Mammary epithelial cell (primary cell): ENCODE measurements at regions of chr16 and their contacts with region 1.

Region 1: GRCh38 chr16:84044118-84044488 is 1.5 kb upstream of the SLC38A8 start:
- DNase-seq: no peak
- H3K4me3 ChIP-seq: no peak overlapping the region
- H3K27ac ChIP-seq: no peak overlapping the region
- H3K4me1 ChIP-seq: no peaks in the 10 kb centered on the region
- H3K27me3 ChIP-seq: peaks cover 3% of the 10 kb centered on the region
- CTCF ChIP-seq: peak; percentile 5 to 45

Region 2: GRCh38 chr16:83952940-83953795 is 90.9 kb before region 1 on chr16 and contains the start of gene OSGIN1:
- CTCF ChIA-PET with region 1: interaction called, 6 read pairs
- dilution Hi-C with region 1: loop called (anchors 5 kb)
- in situ Hi-C with region 1: loop called in 1 of 2 experiments (anchors 5 kb)
- intact Hi-C with region 1: loop called (anchors 2 kb)
- DNase-seq: peak; percentile 92
- H3K4me3 ChIP-seq: peak within 1 kb of the TSS; percentile 65 to 76 (median 66)
- H3K27ac ChIP-seq: peak within 1 kb of the TSS; percentile 82
- H3K4me1 ChIP-seq: peaks cover 21% of the 10 kb centered on the region
- H3K27me3 ChIP-seq: no peaks in the 10 kb centered on the region
- CTCF ChIP-seq: no peak
- total RNA-seq, gene OSGIN1: 3.3 to 9.3 TPM

Region 3: DNA sequence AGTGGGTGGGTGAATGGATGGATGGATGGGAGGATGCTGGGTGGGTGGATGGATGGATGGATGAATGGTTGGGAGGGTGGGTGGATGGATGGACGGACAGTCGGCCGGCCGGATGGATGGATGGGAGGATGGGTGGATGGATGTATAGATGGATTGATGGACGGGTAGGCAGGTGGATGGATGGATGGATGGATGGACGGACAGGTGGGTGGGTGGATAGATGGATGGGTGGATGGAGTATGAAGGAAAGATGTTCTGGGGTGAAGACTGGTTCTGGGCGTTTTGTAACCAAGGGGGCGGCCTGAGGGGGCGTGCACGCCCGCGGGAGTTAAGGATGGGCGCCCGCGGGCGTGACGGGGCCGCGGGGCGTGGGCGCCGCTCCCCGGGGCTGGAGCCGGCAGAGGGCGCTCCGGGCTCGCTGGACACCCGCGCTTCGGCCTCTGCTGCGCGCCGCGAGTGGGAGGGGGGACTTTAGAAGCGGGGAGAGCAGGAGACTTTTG is 76.2 kb before region 1 on chr16 and contains the start of gene NECAB2:
- CTCF ChIA-PET with region 1: no interaction called
- dilution Hi-C with region 1: no loop called
- in situ Hi-C with region 1: loop called in 1 of 2 experiments (anchors 10 kb)
- intact Hi-C with region 1: loop called (anchors 2 kb)
- DNase-seq: no peak
- H3K4me3 ChIP-seq: peak within 1 kb of the TSS in 2 of 3 experiments; percentile 6 to 34
- H3K27ac ChIP-seq: no peak within 1 kb of the TSS
- H3K4me1 ChIP-seq: no peaks in the 10 kb centered on the region
- H3K27me3 ChIP-seq: peaks cover 6% of the 10 kb centered on the region
- CTCF ChIP-seq: peak; percentile 20 to 60
- total RNA-seq, gene NECAB2: 0.87 TPM in 1 of 2 donors, not detected in the other

Region 4: DNA sequence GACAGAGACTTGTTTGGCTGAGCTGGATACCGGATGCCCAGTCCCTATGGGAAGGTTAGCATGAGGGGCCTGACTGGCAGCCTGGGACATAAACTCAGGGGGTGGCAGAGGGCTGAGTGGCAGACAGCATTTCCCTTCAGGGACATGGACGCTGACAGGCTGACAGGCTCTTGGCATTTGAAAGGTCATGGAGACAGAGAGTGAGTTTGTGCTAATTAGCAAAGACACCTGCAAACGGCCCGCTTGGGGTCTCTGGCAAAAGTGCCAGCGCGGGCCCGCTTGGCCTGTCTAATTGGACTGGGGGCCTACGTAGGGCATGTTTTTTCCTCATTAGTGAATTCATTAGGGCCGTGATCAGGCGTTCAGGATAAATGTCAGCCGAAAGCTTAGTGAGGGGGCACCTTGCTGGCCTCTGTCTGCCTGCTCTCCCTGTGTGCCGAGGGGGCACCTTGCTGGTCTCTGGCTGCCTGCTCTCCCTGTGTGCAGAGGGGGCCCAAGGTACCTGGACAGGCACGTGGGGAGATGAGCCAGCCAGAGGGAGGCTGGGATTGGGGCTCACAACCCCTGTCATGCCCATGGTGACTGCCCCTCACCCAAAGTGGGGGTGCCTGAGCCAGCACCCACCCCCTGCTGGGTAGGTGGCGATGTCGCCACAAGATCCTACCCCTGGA is 68.4 kb before region 1 on chr16:
- CTCF ChIA-PET with region 1: no interaction called
- dilution Hi-C with region 1: loop called (anchors 5 kb)
- in situ Hi-C with region 1: loop called in 1 of 2 experiments (anchors 10 kb)
- intact Hi-C with region 1: no loop called
- DNase-seq: no peak
- H3K4me3 ChIP-seq: no peak overlapping the region
- H3K27ac ChIP-seq: no peak overlapping the region
- H3K4me1 ChIP-seq: no peaks in the 10 kb centered on the region
- H3K27me3 ChIP-seq: no peaks in the 10 kb centered on the region
- CTCF ChIP-seq: no peak